ENCODE measurements at regions of chr5 and their contacts with region 1.

Region 1: GRCh38 chr5:10635257-10635866 is 71.5 kb downstream of the ANKRD33B start:
- DNase-seq: no peak
- H3K4me3 ChIP-seq: no peak overlapping the region
- H3K27ac ChIP-seq: no peak overlapping the region
- H3K4me1 ChIP-seq: peaks cover 0 to 19% (median 5%) of the 10 kb centered on the region in 4 donors
- H3K27me3 ChIP-seq: no peaks in the 10 kb centered on the region
- CTCF ChIP-seq: no peak
- EP300 ChIP-seq: no peak
- POLR2A ChIP-seq: no peak

Region 2: GRCh38 chr5:10283927-10284635 is 351.3 kb before region 1 on chr5:
- in situ Hi-C with region 1: loop called in 3 of 4 experiments (anchors 25 kb)
- intact Hi-C with region 1: no loop called
- DNase-seq: peak; percentile 90
- H3K4me3 ChIP-seq: no peak overlapping the region
- H3K27ac ChIP-seq: no peak overlapping the region
- H3K4me1 ChIP-seq: peaks cover 9 to 25% (median 16%) of the 10 kb centered on the region in 4 donors
- H3K27me3 ChIP-seq: no peaks in the 10 kb centered on the region
- CTCF ChIP-seq: peak; percentile 87 to 95 (median 93)
- EP300 ChIP-seq: no peak
- POLR2A ChIP-seq: no peak

Region 3: DNA sequence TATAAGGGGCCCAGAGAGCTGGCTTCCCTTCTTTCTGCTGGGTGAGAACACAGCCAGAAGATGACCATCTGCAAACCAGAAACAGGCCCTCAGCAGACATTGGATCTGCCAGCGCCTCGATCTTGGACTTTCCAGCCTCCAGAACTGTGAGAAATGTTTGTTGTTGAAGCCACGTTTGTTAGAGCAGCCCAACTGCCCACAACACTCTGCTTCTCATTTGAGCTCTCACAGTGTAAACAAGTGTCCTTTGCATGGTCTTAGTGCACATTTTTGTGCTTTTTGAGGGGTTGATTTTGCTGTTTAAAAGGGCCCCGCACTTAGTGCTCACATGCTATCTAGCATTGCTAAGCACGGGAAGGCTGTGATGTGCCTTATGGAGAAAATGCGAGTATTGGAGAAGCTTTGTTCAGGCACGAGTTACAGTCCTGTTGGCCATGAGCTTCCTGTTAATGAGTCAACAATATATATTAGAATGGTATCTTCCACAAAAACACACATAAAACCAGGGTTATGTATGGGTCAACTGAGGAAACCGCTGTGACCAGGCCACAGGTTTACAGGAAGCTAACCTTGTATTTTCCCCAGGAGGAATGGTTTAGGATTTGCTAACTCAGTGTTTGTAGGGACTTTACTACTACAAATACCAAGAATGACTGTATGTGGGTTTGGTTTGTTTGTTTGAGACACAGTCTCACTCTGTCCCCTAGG is 339.6 kb before region 1 on chr5:
- in situ Hi-C with region 1: loop called in 3 of 4 experiments (anchors 25 kb)
- intact Hi-C with region 1: loop called (anchors 10 kb)
- DNase-seq: no peak
- H3K4me3 ChIP-seq: no peak overlapping the region
- H3K27ac ChIP-seq: peak overlapping the region in 2 of 4 donors; percentile 2 to 8
- H3K4me1 ChIP-seq: peaks cover 0 to 7% (median 3%) of the 10 kb centered on the region in 4 donors
- H3K27me3 ChIP-seq: no peaks in the 10 kb centered on the region
- CTCF ChIP-seq: no peak
- EP300 ChIP-seq: no peak
- POLR2A ChIP-seq: no peak

Region 4: DNA sequence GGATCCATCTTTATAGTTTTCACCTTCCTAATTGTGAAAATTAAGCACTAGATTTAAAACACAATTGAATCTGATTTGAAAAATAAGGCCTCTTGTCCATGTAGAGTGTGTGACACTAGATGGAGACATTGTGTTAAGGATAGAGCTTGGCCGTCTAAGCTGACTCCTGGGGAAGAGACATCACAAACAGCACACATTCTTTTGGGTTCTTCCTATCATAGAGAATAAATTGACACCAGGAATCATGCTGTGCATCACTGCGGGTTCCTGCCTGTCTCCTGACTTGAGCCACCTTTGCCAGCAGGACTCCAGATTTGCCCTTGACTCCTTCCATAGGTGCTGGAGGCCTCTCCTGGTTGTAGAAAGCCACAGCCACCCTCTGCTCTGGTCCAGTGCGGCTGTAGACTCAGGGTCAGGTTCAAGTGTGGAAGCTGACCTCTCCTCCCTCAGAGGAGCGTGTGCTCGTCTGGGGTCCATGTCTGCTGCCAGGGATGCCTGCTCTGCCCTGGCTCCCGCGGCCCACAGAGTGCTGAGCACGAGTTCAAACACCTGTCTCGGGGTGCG is 182.5 kb before region 1 on chr5:
- in situ Hi-C with region 1: loop called in 1 of 4 experiments (anchors 5 kb)
- intact Hi-C with region 1: no loop called
- DNase-seq: no peak
- H3K4me3 ChIP-seq: no peak overlapping the region
- H3K27ac ChIP-seq: no peak overlapping the region
- H3K4me1 ChIP-seq: peaks cover 0 to 2% (median 0%) of the 10 kb centered on the region in 4 donors
- H3K27me3 ChIP-seq: no peaks in the 10 kb centered on the region
- CTCF ChIP-seq: peak; percentile 43 to 79 (median 67)
- EP300 ChIP-seq: no peak
- POLR2A ChIP-seq: no peak

Region 5: GRCh38 chr5:10712574-10713517 is 77.5 kb after region 1 on chr5:
- in situ Hi-C with region 1: no loop called
- intact Hi-C with region 1: no loop called
- DNase-seq: no peak
- H3K4me3 ChIP-seq: no peak overlapping the region
- H3K27ac ChIP-seq: no peak overlapping the region
- H3K4me1 ChIP-seq: no peaks in the 10 kb centered on the region
- H3K27me3 ChIP-seq: no peaks in the 10 kb centered on the region
- CTCF ChIP-seq: no peak
- EP300 ChIP-seq: no peak
- POLR2A ChIP-seq: no peak

Measured in transverse colon (tissue), 4 donors.